Lower lobe of right lung (tissue), 2 donors: ENCODE measurements at regions of chr2 and their contacts with region 1.

Region 1: GRCh38 chr2:119218478-119219064 is 5.1 kb upstream of the STEAP3 start:
- DNase-seq: peak; percentile 50
- ATAC-seq: peak in 1 of 2 donors; percentile 5
- H3K4me3 ChIP-seq: no peak overlapping the region
- H3K27ac ChIP-seq: no peak overlapping the region
- H3K4me1 ChIP-seq: peaks cover 1% of the 10 kb centered on the region
- H3K27me3 ChIP-seq: no peaks in the 10 kb centered on the region
- CTCF ChIP-seq: peak; percentile 18

Region 2: DNA sequence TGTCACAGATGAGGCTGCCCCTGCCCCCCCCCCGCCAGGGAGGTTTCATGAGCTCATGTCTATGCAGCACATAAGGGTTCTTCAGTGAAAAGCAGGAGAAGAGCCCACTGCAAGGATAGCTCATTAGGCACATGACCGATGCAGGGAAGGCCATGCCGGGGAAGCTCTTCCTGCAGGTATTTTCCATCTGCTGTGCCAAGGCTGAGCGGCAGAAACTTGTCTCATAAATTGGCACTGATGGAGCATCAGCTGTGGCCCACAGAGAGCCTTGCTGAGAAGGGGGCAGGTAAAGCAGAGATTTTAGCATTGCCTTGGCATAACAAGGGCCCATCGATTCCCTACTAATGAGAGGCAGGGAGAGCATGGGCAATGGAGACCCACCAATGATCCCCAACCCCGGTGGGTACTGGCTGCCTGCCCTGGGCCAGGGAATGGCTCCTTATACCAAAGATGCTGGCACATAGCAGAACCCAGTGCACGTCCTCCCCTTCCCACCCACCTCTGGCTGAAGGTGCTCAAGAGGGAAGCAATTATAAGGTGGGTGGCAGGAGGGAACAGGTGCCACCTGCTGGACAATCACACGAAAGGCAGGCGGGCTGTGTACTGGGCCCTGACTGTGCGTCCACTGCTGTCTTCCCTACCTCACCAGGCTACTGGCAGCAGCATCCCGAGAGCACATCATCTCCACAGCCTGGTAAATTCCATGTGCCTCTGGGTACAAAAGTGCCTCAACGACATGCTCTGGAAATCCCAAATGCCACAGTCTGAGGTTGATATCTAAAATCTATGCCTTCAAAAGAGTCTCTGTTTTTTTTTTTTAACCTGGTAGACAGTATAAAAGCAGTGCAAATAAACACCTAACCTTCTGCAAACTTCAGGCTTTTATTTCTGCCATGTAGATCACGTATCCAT is 46.5 kb after region 1 on chr2:
- intact Hi-C with region 1: loop called (anchors 10 kb)
- DNase-seq: no peak
- ATAC-seq: peak; percentile 84 to 85
- H3K4me3 ChIP-seq: no peak overlapping the region
- H3K27ac ChIP-seq: no peak overlapping the region
- H3K4me1 ChIP-seq: no peaks in the 10 kb centered on the region
- H3K27me3 ChIP-seq: no peaks in the 10 kb centered on the region
- CTCF ChIP-seq: peak; percentile 71